ENCODE measurements at regions of chr11 and their contacts with region 1.

Region 1: DNA sequence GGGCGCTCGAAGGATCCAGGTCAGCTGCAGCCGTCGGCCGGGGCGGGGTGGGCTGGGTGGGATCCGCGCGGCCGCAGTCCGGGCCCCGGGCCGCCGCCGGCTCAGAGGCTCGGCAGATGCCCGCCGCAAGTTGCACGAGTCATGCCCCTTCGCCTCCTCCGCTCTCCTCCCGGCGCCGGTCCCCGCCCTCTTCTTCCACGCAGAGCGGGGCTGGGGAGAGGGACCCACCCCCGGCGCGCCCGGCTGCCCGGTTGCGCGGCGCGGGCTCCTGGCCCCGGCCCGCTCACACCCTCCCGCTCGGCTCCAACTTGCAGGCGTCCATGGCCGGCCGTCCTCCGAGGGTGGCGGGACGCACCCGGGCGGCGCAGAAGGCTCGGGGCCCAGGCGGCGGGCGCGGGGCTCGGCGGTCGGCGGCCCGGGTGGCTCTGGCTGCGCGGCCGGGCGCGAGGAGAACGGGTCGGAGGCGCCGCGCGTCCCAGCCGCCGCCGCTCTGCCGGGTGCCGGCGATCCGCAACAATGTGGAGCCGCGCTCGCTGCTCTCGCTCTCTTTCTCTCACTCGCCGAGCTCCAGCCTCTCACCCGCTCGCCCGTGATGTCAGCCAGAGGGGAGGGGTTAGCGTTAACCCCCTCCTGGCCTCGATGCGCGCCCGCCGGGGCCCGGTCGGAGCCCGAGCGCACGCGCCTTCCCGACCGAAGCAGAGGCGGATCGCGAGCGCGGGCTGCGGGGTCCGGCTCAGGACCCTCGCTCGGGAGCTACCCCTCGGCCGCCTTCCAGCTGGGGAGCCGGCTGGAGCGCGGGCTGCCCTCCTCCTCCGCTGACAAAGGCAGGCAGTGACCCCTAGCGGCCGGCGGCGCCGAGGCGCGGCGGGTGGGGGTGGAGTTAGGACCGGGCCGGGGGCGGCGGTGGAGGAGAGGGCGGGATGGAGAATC is at the start of gene NECTIN1:
- DNase-seq: peak; percentile 89 to 96 (median 95)
- ATAC-seq: peak; percentile 94 to 95
- H3K4me3 ChIP-seq: peak within 1 kb of the TSS; percentile 52
- H3K27ac ChIP-seq: peak within 1 kb of the TSS; percentile 22
- H3K4me1 ChIP-seq: no peaks in the 10 kb centered on the region
- H3K27me3 ChIP-seq: no peaks in the 10 kb centered on the region
- total RNA-seq, gene NECTIN1: 5.2 to 14.5 (median 10.8) TPM

Region 2: GRCh38 chr11:119481021-119481666 is 247.8 kb before region 1 on chr11:
- intact Hi-C with region 1: loop called in 1 of 4 experiments (anchors 10 kb)
- DNase-seq: peak; percentile 83 to 92 (median 90)
- ATAC-seq: peak; percentile 72 to 87
- H3K4me3 ChIP-seq: no peak overlapping the region
- H3K27ac ChIP-seq: no peak overlapping the region
- H3K4me1 ChIP-seq: no peaks in the 10 kb centered on the region
- H3K27me3 ChIP-seq: no peaks in the 10 kb centered on the region

Region 3: GRCh38 chr11:119666463-119667131 is 62.3 kb before region 1 on chr11:
- intact Hi-C with region 1: loop called in 3 of 4 experiments (anchors 5 kb)
- DNase-seq: peak; percentile 76 to 93 (median 92)
- ATAC-seq: peak; percentile 92 to 95
- H3K4me3 ChIP-seq: no peak overlapping the region
- H3K27ac ChIP-seq: no peak overlapping the region
- H3K4me1 ChIP-seq: no peaks in the 10 kb centered on the region
- H3K27me3 ChIP-seq: no peaks in the 10 kb centered on the region

Region 4: DNA sequence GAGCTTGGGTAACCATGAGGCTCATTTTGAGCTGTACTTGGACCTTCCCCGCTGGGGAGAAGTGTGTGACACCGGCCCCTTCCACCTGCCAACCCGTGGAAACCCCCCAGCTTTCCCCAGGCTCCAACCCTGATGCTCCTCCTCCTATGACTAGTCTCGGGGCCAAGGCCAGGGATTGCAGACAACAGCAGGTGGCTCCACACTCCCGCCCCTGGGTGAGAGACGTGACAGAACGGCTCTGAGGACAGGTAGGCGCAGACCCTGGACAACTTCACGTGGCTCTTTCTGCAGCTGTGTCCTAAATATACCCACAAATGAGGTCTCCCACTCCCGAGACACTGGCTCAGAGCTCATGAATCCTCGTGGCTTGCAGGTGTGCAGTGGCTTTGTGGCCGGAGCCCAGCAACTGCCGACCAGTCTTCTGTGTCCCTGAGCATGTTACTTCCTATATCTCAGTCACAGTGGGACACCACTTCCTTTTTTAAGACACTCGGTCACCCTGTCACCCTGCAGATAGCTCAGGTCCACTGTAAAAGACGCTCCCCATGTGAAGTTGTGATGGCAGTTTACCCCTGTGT is 55.1 kb before region 1 on chr11:
- intact Hi-C with region 1: loop called in 3 of 4 experiments (anchors 5 kb)
- DNase-seq: no peak
- ATAC-seq: no peak
- H3K4me3 ChIP-seq: no peak overlapping the region
- H3K27ac ChIP-seq: no peak overlapping the region
- H3K4me1 ChIP-seq: no peaks in the 10 kb centered on the region
- H3K27me3 ChIP-seq: no peaks in the 10 kb centered on the region

Region 5: DNA sequence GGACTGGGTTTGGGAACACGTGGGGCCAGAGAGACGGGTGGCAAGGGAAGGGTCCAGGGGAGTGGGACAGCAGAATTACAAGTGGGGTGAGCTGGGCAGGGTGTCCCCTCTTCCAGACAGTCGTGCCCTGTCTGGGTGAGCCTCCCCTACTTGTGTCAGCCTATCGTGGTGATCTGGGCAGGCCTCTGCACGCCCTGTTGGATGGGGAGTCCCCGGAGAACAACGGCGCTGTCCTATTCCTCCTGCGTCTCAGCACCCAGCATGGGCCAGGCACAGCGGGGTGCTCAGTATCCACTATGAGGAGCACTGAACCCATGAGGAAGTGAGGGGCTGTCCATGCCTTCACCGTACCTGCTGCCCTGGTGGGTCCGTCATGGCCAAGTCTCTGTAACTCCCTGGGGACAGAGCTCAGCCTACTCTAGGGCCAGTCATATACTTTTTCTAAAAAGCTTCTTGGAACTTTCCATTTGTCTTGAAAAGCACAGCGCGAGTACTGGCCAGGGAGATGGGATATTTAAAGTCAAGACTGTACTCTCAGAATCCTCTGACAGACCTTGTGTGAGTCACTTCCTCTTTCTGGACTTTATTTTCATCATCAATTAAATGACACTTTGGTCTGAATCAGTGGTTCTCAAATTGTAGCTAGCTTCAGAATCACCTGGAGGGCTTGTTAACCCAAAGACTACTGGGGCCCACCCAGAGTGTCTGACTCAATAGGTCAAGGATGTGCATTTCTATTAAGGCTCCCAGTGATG is 81.7 kb after region 1 on chr11:
- intact Hi-C with region 1: no loop called
- DNase-seq: no peak
- ATAC-seq: no peak
- H3K4me3 ChIP-seq: no peak overlapping the region
- H3K27ac ChIP-seq: no peak overlapping the region
- H3K4me1 ChIP-seq: no peaks in the 10 kb centered on the region
- H3K27me3 ChIP-seq: no peaks in the 10 kb centered on the region

Measured in right cardiac atrium (tissue), 5 donors.